PC-3 (cell line): ENCODE measurements at regions of chr2 and their contacts with region 1.

Region 1: GRCh38 chr2:26846328-26847306 is 1.3 kb upstream of the DPYSL5 start:
- DNase-seq: peak; percentile 85
- ATAC-seq: peak; percentile 85
- H3K4me3 ChIP-seq: no peak overlapping the region
- H3K27ac ChIP-seq: no peak overlapping the region
- H3K4me1 ChIP-seq: peaks cover 10% of the 10 kb centered on the region; the same call in 1 of the 2 replicates
- H3K27me3 ChIP-seq: peaks cover 81% of the 10 kb centered on the region
- CTCF ChIP-seq: peak; percentile 88

Region 2: DNA sequence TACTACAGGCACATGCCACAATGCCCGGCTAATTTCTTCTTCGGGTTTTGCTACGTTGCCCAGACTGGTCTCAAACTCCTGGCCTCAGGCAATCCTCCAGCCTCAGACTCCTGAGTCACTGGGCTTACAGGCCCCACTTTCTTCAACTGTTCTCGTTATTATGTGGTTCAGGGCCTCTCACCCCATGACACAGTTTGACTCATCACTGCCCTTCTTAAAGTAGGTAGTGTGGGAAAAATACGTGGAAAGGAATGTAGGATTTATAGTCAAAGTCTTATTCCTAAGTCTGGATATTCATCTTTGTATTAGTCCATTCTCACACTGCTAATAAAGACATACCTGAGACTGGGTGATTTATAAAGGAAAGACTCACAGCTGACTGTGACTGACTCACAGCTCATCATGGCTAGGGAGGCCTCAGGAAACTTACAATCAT is 41.4 kb before region 1 on chr2:
- CTCF ChIA-PET with region 1: no interaction called
- POLR2A ChIA-PET with region 1: no interaction called
- intact Hi-C with region 1: no loop called
- DNase-seq: peak; percentile 95
- ATAC-seq: peak; percentile 82
- H3K4me3 ChIP-seq: no peak overlapping the region
- H3K27ac ChIP-seq: peak overlapping the region; percentile 93
- H3K4me1 ChIP-seq: peaks cover 15% of the 10 kb centered on the region
- H3K27me3 ChIP-seq: no peaks in the 10 kb centered on the region
- CTCF ChIP-seq: no peak

Region 3: DNA sequence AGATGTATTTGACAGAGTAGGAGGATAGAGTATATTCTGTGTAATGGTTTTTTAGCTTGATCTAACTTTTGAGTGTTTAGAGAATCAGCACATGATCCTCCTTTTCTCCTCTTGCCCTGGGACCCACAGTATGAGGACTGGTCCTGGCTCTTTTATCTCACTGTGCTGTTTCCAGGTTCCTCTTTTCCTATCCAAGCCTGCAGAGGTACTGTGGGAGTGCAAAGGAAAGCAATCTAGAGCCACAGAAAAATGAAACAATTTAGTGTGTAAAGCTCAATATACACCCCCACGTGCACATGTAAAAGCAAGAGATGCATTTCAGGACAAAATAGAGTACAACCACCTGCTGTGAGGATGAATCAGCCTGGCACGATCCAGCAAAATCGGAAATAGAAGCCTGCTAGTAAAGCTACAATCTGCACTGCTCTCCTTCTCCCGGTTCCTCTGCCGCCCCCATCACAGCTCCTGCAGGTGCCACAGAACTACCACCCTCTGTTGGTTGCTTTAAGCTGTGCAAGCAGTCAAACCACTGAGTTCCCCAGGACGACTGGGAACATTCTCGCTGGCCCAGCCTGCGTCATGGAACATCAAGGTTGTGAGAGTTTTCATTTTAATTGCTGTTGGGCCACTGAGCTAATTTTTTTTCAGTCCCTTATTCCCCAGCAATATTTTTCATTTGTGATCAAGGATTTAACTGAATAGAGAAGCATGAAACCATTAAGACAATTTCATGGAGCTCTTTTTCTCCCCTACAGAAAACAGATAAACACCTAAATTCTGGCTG is 76.0 kb after region 1 on chr2:
- CTCF ChIA-PET with region 1: interaction called, 14 read pairs
- POLR2A ChIA-PET with region 1: no interaction called
- intact Hi-C with region 1: loop called (anchors 2 kb)
- DNase-seq: peak; percentile 65
- ATAC-seq: peak; percentile 93
- H3K4me3 ChIP-seq: no peak overlapping the region
- H3K27ac ChIP-seq: no peak overlapping the region
- H3K4me1 ChIP-seq: no peaks in the 10 kb centered on the region
- H3K27me3 ChIP-seq: peaks cover 22% of the 10 kb centered on the region
- CTCF ChIP-seq: peak; percentile 73

Region 4: GRCh38 chr2:26942543-26943295 is 96.1 kb after region 1 on chr2:
- CTCF ChIA-PET with region 1: interaction called, 10 read pairs
- POLR2A ChIA-PET with region 1: no interaction called
- intact Hi-C with region 1: loop called (anchors 2 kb)
- DNase-seq: peak; percentile 55
- ATAC-seq: peak; percentile 39; the same call in 1 of the 2 replicates
- H3K4me3 ChIP-seq: no peak overlapping the region
- H3K27ac ChIP-seq: no peak overlapping the region
- H3K4me1 ChIP-seq: peaks cover 13% of the 10 kb centered on the region; the same call in 1 of the 2 replicates
- H3K27me3 ChIP-seq: no peaks in the 10 kb centered on the region
- CTCF ChIP-seq: peak; percentile 81